OCI-LY7 (cell line): ENCODE measurements at regions of chr11 and their contacts with region 1.

Region 1: DNA sequence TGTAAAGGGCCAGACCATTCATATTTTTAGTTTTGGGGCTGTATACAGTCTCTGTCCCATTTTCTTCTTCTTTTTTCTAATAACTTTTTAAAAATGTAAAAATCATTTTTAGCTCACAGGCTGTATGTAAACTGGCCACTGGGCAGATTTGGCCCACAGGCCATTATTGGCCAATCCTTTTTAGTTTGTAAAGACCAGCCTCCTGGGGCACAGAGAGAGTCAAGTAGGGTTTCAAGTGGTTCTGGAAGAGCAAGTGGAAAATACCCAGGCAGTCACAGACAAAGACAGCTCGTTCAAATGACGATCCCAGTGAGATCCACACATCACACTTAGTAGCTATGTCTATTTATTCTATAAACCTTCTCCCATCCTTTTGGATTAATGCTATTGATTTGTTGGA is 150.2 kb upstream of the ARHGAP20 start:
- DNase-seq: no peak
- H3K4me3 ChIP-seq: no peak overlapping the region
- H3K27ac ChIP-seq: no peak overlapping the region
- H3K4me1 ChIP-seq: no peaks in the 10 kb centered on the region
- CTCF ChIP-seq: no peak

Region 2: GRCh38 chr11:110837603-110838002 is 24.8 kb before region 1 on chr11:
- CTCF ChIA-PET with region 1: no interaction called
- POLR2A ChIA-PET with region 1: no interaction called
- intact Hi-C with region 1: no loop called
- DNase-seq: no peak
- H3K4me3 ChIP-seq: no peak overlapping the region
- H3K27ac ChIP-seq: no peak overlapping the region
- H3K4me1 ChIP-seq: no peaks in the 10 kb centered on the region
- CTCF ChIP-seq: no peak

Region 3: GRCh38 chr11:110874437-110875030 is 12.1 kb after region 1 on chr11:
- CTCF ChIA-PET with region 1: no interaction called
- POLR2A ChIA-PET with region 1: interaction called, 11 read pairs
- intact Hi-C with region 1: no loop called
- DNase-seq: no peak
- H3K4me3 ChIP-seq: no peak overlapping the region
- H3K27ac ChIP-seq: no peak overlapping the region
- H3K4me1 ChIP-seq: no peaks in the 10 kb centered on the region
- CTCF ChIP-seq: no peak